ENCODE measurements at regions of chr19 and their contacts with region 1.

Region 1: GRCh38 chr19:21020298-21021227 is at the start of gene ZNF430:
- DNase-seq: peak; percentile 86 to 97 (median 93)
- ATAC-seq: peak; percentile 95
- H3K4me3 ChIP-seq: peak within 1 kb of the TSS; percentile 65 to 91
- H3K4me3 Mint-ChIP-seq: peak within 1 kb of the TSS; percentile 100
- H3K27ac ChIP-seq: peak within 1 kb of the TSS; percentile 92 to 95
- H3K27ac Mint-ChIP-seq: peak within 1 kb of the TSS; percentile 100
- H3K4me1 ChIP-seq: peaks cover 26% of the 10 kb centered on the region
- H3K4me1 Mint-ChIP-seq: peaks cover 48% of the 10 kb centered on the region
- H3K27me3 ChIP-seq: no peaks in the 10 kb centered on the region
- H3K27me3 Mint-ChIP-seq: no peaks in the 10 kb centered on the region
- CTCF ChIP-seq: no peak
- total RNA-seq, gene ZNF430: 42.3 to 45.1 TPM

Region 2: GRCh38 chr19:20039203-20039723 is 981.3 kb before region 1 on chr19 and contains the start of gene ZNF682:
- CTCF ChIA-PET with region 1: no interaction called
- POLR2A ChIA-PET with region 1: interaction called, 3 read pairs
- intact Hi-C with region 1: loop called in 1 of 2 experiments (anchors 1 kb)
- DNase-seq: peak; percentile 87 to 97 (median 95)
- ATAC-seq: peak; percentile 99
- H3K4me3 ChIP-seq: peak within 1 kb of the TSS; percentile 71 to 72
- H3K4me3 Mint-ChIP-seq: peak within 1 kb of the TSS; percentile 98
- H3K27ac ChIP-seq: peak within 1 kb of the TSS; percentile 60 to 68
- H3K27ac Mint-ChIP-seq: peak within 1 kb of the TSS; percentile 96
- H3K4me1 ChIP-seq: peaks cover 13% of the 10 kb centered on the region
- H3K4me1 Mint-ChIP-seq: peaks cover 20% of the 10 kb centered on the region
- H3K27me3 ChIP-seq: no peaks in the 10 kb centered on the region
- H3K27me3 Mint-ChIP-seq: peaks cover 2% of the 10 kb centered on the region
- CTCF ChIP-seq: no peak
- total RNA-seq, gene ZNF682: 13.3 to 16.0 TPM

Region 3: DNA sequence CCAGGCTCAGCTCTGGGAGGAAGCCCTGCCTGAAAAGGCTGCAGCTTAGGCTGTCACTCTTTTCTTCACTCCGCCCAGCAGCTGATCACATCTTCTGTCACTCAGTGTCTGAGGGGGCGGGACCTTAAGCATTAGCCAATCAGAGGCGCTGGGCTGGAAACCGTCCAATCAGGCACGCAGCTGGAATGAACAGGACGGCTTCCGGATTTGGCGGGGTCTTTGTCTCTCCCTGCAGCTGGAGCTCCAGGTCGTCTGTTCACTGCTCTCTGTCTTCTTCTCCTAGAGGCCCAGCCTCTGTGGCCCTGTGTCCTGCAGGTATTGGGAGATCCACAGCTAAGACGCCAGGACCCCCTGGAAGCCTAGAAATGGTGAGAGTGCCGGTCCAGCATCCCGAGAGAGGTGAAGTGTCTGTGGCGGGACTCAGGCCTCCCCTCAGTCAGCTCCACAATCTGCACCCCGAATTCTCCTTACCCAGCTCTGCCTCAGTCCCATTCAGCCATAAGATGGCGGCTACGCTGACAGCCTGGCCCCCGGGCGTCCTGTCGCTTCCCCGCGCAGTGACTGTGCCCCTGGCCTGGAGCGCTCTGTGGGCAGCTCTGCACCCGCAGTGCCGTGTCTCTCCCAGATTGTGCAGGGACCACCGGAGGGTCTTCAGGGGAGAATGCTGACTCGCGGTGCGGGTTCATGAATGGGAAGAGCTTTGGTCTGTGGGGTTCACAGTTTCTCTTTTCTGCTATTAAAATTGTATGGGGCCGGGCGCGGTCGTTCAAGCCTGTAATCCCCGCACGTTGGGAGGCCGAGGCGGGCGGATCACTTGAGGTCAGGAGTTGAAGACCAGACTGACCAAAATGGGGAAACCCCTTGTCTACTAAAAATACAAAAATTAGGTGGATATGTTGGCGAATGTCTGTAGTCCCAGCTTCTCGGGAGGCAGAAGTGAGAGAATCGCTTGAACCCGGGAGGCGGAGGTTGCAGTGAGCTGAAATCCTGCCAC is 244.2 kb before region 1 on chr19 and contains the start of gene ZNF66:
- CTCF ChIA-PET with region 1: no interaction called
- POLR2A ChIA-PET with region 1: interaction called, 9 read pairs
- intact Hi-C with region 1: loop called (anchors 2 kb)
- DNase-seq: peak; percentile 88 to 97 (median 95)
- ATAC-seq: peak; percentile 98
- H3K4me3 ChIP-seq: peak within 1 kb of the TSS; percentile 96 to 99
- H3K4me3 Mint-ChIP-seq: peak within 1 kb of the TSS; percentile 99
- H3K27ac ChIP-seq: peak within 1 kb of the TSS; percentile 86 to 89
- H3K27ac Mint-ChIP-seq: peak within 1 kb of the TSS; percentile 97
- H3K4me1 ChIP-seq: no peaks in the 10 kb centered on the region
- H3K4me1 Mint-ChIP-seq: peaks cover 33% of the 10 kb centered on the region
- H3K27me3 ChIP-seq: no peaks in the 10 kb centered on the region
- H3K27me3 Mint-ChIP-seq: no peaks in the 10 kb centered on the region
- CTCF ChIP-seq: no peak
- total RNA-seq, gene ZNF66: 7.3 to 8.2 TPM

Region 4: GRCh38 chr19:20964798-20965197 is 55.8 kb before region 1 on chr19:
- CTCF ChIA-PET with region 1: no interaction called
- POLR2A ChIA-PET with region 1: no interaction called
- intact Hi-C with region 1: no loop called
- DNase-seq: peak in 2 of 9 experiments; percentile 22
- ATAC-seq: no peak
- H3K4me3 ChIP-seq: no peak overlapping the region
- H3K4me3 Mint-ChIP-seq: no peak overlapping the region
- H3K27ac ChIP-seq: no peak overlapping the region
- H3K27ac Mint-ChIP-seq: no peak overlapping the region
- H3K4me1 ChIP-seq: no peaks in the 10 kb centered on the region
- H3K4me1 Mint-ChIP-seq: no peaks in the 10 kb centered on the region
- H3K27me3 ChIP-seq: no peaks in the 10 kb centered on the region
- H3K27me3 Mint-ChIP-seq: no peaks in the 10 kb centered on the region
- CTCF ChIP-seq: no peak

Region 5: DNA sequence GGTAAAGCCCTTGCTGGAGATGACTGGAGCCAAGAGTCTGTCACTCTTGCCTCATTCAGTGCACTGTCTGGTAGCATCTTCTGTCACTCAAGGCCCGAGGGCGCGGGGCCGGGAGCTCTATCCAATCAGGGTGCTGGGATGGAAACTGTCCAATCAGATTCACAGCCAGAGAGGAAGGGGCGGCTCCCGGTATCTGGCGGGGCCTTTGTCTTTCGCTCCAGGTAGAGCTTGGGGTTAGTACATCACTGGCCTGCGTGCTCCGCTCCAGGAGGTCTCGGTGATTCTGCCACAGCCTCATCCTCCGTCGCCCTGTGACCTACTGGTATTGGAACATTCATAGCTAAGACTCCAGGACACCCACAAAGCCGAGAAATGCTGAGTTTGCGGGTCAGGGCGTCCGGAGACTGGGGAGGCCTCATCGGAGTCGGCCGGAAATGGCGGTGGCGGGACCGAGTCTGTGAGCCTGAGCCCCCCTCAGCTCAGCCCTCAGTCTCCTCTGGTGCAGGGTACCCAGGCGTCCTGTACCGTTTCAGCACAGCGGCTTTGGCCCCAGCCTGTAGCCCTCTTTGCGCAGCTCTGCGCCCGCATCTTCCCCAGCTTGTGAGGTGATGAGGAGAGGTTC is 20.7 kb before region 1 on chr19:
- CTCF ChIA-PET with region 1: no interaction called
- POLR2A ChIA-PET with region 1: interaction called, 18 read pairs
- intact Hi-C with region 1: loop called (anchors 1 kb)
- DNase-seq: peak; percentile 67 to 94 (median 82)
- ATAC-seq: peak; percentile 100
- H3K4me3 ChIP-seq: peak overlapping the region; percentile 48 to 69
- H3K4me3 Mint-ChIP-seq: peak overlapping the region; percentile 85
- H3K27ac ChIP-seq: no peak overlapping the region
- H3K27ac Mint-ChIP-seq: no peak overlapping the region
- H3K4me1 ChIP-seq: no peaks in the 10 kb centered on the region
- H3K4me1 Mint-ChIP-seq: peaks cover 3% of the 10 kb centered on the region
- H3K27me3 ChIP-seq: no peaks in the 10 kb centered on the region
- H3K27me3 Mint-ChIP-seq: no peaks in the 10 kb centered on the region
- CTCF ChIP-seq: no peak

Region 6: GRCh38 chr19:21141787-21142464 is 121.4 kb after region 1 on chr19 and contains the start of gene ZNF431:
- CTCF ChIA-PET with region 1: no interaction called
- POLR2A ChIA-PET with region 1: interaction called, 17 read pairs
- intact Hi-C with region 1: loop called (anchors 1 to 2 kb)
- DNase-seq: peak; percentile 79 to 96 (median 88)
- ATAC-seq: peak; percentile 99
- H3K4me3 ChIP-seq: peak within 1 kb of the TSS; percentile 68 to 90
- H3K4me3 Mint-ChIP-seq: peak within 1 kb of the TSS; percentile 97
- H3K27ac ChIP-seq: peak within 1 kb of the TSS; percentile 65 to 85
- H3K27ac Mint-ChIP-seq: peak within 1 kb of the TSS; percentile 97
- H3K4me1 ChIP-seq: peaks cover 9% of the 10 kb centered on the region
- H3K4me1 Mint-ChIP-seq: peaks cover 46% of the 10 kb centered on the region
- H3K27me3 ChIP-seq: no peaks in the 10 kb centered on the region
- H3K27me3 Mint-ChIP-seq: no peaks in the 10 kb centered on the region
- CTCF ChIP-seq: no peak
- total RNA-seq, gene ZNF431: 31.2 to 32.4 TPM

Region 7: DNA sequence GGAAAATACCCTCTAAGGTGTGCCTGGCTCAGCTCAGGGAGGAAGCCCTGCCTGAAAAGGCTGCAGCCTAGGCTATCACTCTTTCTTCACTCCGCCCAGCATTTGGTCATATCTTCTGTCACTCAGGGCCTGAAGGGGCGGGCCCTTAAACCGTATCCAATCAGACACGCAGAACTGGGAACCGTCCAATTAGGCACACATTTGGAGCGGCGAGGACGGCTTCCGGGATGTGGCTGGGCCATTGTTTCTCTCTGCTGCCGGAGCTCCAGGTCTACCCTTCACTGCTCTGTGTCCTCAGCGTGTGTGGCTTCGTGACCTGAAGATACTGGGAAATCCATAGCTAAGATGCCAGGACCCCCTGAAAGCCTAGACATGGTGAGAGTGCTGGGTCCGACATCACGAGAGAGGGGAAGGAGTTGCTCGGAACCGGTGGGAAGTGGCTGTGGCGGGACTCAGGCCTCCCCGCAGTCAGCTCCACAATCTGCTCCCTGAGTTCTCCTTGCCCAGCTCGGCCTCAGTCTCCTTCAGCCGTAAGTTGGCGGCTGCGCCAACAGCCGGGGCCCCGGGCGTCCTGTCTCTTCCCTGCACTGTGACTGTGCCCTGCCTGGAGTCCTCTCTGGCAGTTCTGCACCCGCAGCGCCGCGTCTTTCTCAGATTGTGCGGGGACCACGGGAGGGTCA is 376.5 kb after region 1 on chr19 and contains the start of gene ZNF493:
- CTCF ChIA-PET with region 1: no interaction called
- POLR2A ChIA-PET with region 1: interaction called, 3 read pairs
- intact Hi-C with region 1: loop called in 1 of 2 experiments (anchors 1 kb)
- DNase-seq: peak; percentile 82 to 96 (median 92)
- ATAC-seq: peak; percentile 99
- H3K4me3 ChIP-seq: peak within 1 kb of the TSS; percentile 73 to 95
- H3K4me3 Mint-ChIP-seq: peak within 1 kb of the TSS; percentile 97
- H3K27ac ChIP-seq: peak within 1 kb of the TSS; percentile 72 to 76
- H3K27ac Mint-ChIP-seq: peak within 1 kb of the TSS; percentile 94
- H3K4me1 ChIP-seq: peaks cover 15% of the 10 kb centered on the region
- H3K4me1 Mint-ChIP-seq: peaks cover 38% of the 10 kb centered on the region
- H3K27me3 ChIP-seq: no peaks in the 10 kb centered on the region
- H3K27me3 Mint-ChIP-seq: no peaks in the 10 kb centered on the region
- CTCF ChIP-seq: no peak
- total RNA-seq, gene ZNF493: 44.6 to 46.1 TPM

Region 8: DNA sequence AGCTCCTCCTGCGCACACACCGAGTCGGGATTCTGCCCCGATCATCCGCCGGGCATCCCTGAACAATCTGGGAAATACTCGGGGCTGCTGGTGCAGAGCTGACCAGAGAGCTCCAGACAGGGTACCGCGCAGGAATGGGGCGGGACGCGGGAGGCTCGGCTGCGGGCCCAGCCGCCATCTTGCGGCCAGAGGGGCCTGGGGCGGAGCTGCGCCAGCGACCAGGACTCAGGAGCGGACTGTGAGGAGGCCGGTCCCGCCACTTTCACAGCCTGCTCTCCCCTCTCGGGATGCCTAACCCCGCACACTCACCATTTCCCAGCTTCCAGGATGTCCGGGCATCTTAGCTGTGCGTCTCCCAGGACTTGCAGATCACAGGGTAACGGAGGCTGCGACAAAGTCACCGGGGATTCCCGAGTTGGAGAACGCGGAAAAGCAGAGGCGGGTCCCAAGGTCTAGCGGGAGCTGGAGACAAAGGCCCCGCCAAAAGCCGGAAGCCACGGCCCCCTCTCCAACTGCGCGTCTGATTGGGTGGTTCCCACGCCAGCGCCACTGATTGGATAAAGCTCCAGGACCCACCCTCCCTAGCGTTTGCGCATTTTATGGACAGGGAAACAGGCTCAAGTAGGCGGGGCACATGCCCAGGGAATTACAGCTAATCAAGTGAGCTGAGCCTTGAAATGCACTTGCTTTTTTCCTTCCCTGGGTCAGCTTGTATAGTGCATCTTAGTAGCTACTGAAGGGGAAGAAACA is 831.2 kb after region 1 on chr19:
- CTCF ChIA-PET with region 1: no interaction called
- POLR2A ChIA-PET with region 1: no interaction called
- intact Hi-C with region 1: loop called in 1 of 2 experiments (anchors 5 kb)
- DNase-seq: peak; percentile 72 to 94 (median 90)
- ATAC-seq: peak; percentile 99
- H3K4me3 ChIP-seq: peak overlapping the region; percentile 95
- H3K4me3 Mint-ChIP-seq: peak overlapping the region; percentile 93
- H3K27ac ChIP-seq: peak overlapping the region; percentile 68 to 80
- H3K27ac Mint-ChIP-seq: peak overlapping the region; percentile 91
- H3K4me1 ChIP-seq: peaks cover 11% of the 10 kb centered on the region
- H3K4me1 Mint-ChIP-seq: peaks cover 26% of the 10 kb centered on the region
- H3K27me3 ChIP-seq: no peaks in the 10 kb centered on the region
- H3K27me3 Mint-ChIP-seq: peaks cover 2% of the 10 kb centered on the region
- CTCF ChIP-seq: no peak

Measured in CD8-positive, alpha-beta T cell (primary cell).